ENCODE measurements at regions of chr3 and their contacts with region 1.

Region 1: DNA sequence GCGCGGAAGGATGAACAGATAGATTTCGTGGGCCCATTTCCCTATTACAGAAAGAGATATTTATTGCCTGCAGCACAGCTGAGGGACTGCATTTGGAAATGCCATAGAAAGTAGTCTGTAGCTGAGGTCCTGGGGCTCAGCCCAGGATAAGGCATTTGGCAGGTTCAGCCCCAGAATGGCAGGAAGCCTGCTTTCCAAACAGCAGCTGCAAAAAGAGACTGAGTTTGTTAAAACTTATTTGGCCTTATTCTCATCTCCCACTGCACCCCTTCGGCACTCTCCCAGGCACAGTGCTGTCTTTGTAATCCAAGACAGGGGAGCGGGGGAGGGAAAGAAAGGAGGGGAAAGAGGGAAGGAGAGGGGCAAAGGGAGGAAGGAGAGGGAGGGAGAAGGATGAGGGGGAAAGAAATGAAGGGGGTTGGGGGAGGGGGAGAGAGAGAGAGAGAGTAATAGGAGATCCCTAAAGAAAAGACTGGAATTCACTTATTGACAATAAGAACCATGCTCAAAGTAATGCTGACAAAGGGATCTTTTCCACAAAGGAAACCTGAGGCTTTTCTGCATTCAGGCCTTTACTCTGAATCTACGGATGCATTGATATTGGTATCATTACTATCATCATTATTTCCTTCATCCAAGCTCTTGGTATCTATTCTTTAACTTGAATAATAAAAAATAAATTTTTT is 94.0 kb upstream of the LRRN1 start:
- DNase-seq: no peak
- H3K4me3 Mint-ChIP-seq: no peak overlapping the region
- H3K27ac Mint-ChIP-seq: no peak overlapping the region
- H3K4me1 Mint-ChIP-seq: peaks cover 37% of the 10 kb centered on the region
- H3K27me3 Mint-ChIP-seq: no peaks in the 10 kb centered on the region
- CTCF ChIP-seq: no peak

Region 2: GRCh38 chr3:3302964-3303363 is 402.3 kb before region 1 on chr3:
- CTCF ChIA-PET with region 1: no interaction called
- intact Hi-C with region 1: no loop called
- DNase-seq: no peak
- H3K4me3 Mint-ChIP-seq: no peak overlapping the region
- H3K27ac Mint-ChIP-seq: no peak overlapping the region
- H3K4me1 Mint-ChIP-seq: no peaks in the 10 kb centered on the region
- H3K27me3 Mint-ChIP-seq: no peaks in the 10 kb centered on the region
- CTCF ChIP-seq: no peak

Region 3: GRCh38 chr3:3560591-3561311 is 144.5 kb before region 1 on chr3:
- CTCF ChIA-PET with region 1: no interaction called
- intact Hi-C with region 1: no loop called
- DNase-seq: no peak
- H3K4me3 Mint-ChIP-seq: no peak overlapping the region
- H3K27ac Mint-ChIP-seq: no peak overlapping the region
- H3K4me1 Mint-ChIP-seq: no peaks in the 10 kb centered on the region
- H3K27me3 Mint-ChIP-seq: no peaks in the 10 kb centered on the region
- CTCF ChIP-seq: no peak

Region 4: GRCh38 chr3:3603351-3603750 is 101.9 kb before region 1 on chr3:
- CTCF ChIA-PET with region 1: no interaction called
- intact Hi-C with region 1: no loop called
- DNase-seq: no peak
- H3K4me3 Mint-ChIP-seq: no peak overlapping the region
- H3K27ac Mint-ChIP-seq: no peak overlapping the region
- H3K4me1 Mint-ChIP-seq: peaks cover 8% of the 10 kb centered on the region
- H3K27me3 Mint-ChIP-seq: no peaks in the 10 kb centered on the region
- CTCF ChIP-seq: no peak

Region 5: DNA sequence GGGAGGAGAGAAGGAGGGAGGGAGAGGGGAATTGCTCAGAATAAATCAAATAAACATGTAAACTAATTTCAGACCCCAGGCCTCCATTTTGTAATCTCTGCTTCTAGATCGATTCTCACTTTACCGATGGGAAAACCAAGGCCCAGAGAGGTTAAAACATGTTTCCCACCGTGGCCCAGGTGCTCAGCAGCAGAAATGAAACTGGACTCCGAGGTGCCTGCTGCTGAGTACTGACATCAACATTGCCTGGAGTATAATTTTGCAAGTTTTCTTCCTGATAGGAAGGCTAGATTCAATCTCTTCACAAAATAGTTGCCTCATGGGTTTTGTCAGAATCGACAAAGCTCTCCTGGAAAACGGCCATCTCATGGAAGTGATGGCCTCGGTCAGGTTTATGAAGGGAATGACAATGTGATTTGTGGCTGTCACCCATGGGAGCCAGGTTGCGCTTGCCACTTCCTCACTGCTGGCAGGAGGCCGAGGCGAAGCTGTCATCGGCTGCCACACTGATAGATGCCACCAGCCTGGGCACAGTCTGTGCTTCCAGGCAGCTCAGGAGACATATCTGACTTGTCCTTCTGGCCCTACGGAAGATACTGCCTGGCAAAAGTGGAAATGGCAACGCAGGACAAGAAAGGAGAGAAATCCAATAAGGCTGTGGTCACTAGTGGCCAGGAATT is 39.1 kb before region 1 on chr3:
- CTCF ChIA-PET with region 1: interaction called, 5 read pairs
- intact Hi-C with region 1: loop called (anchors 5 kb)
- DNase-seq: peak; percentile 31
- H3K4me3 Mint-ChIP-seq: peak overlapping the region; percentile 42
- H3K27ac Mint-ChIP-seq: peak overlapping the region; percentile 83
- H3K4me1 Mint-ChIP-seq: peaks cover 41% of the 10 kb centered on the region
- H3K27me3 Mint-ChIP-seq: no peaks in the 10 kb centered on the region
- CTCF ChIP-seq: no peak

Region 6: DNA sequence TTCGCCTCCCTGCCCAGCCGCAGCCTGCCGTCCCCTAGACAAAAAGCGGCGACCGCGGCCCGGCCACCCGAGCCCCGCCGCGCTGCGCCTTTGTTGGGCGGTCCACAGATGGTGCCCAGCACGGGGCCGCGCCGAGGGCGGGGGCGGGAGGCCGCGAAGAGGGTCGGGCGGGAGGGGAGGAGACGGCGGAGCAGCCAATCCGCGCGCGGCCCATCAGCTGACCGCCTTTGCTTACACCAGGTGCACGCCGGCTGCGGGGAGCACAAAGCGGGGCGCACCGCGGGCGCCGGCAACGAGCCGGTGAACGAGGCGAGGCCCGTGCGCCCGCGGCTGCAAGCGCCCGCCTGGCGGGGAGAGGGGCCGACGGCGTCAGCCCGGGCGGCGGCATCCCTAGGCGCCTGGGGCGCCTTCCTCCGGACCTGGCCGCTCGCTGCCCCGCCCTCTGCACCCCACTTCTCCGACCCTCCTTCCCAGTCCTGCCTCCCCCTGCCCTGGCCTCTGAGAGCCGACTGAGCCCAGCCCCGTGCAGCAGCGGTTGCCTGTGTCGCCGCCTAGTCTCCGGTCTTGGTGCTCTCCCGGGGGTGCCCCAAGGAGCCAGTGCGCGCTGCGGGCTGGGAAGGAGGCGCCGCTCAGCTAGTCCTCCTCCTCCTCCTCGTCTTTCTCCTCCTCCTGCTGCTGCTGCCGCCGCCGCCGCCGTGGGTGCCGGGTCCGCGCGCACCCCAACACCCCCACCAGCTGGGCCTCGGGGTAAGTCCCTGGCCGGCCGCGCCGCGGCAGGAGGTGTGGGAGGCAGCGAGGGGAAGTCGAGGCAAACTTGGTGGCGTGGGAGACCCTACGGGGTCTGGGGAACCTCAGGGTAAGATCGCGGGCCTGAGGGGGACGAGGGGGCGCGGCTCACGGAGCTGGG is 94.2 kb after region 1 on chr3 and contains the start of gene LRRN1:
- CTCF ChIA-PET with region 1: no interaction called
- intact Hi-C with region 1: loop called (anchors 5 kb)
- DNase-seq: peak; percentile 73
- H3K4me3 Mint-ChIP-seq: peak within 1 kb of the TSS; percentile 91
- H3K27ac Mint-ChIP-seq: peak within 1 kb of the TSS; percentile 23
- H3K4me1 Mint-ChIP-seq: no peaks in the 10 kb centered on the region
- H3K27me3 Mint-ChIP-seq: peaks cover 24% of the 10 kb centered on the region
- CTCF ChIP-seq: no peak
- total RNA-seq, gene LRRN1: 12.6 and 22.1 TPM in 2 replicates

Region 7: GRCh38 chr3:3842356-3842755 is 137.1 kb after region 1 on chr3:
- CTCF ChIA-PET with region 1: no interaction called
- intact Hi-C with region 1: loop called (anchors 5 kb)
- DNase-seq: no peak
- H3K4me3 Mint-ChIP-seq: no peak overlapping the region
- H3K27ac Mint-ChIP-seq: no peak overlapping the region
- H3K4me1 Mint-ChIP-seq: no peaks in the 10 kb centered on the region
- H3K27me3 Mint-ChIP-seq: no peaks in the 10 kb centered on the region
- CTCF ChIP-seq: no peak

Region 8: GRCh38 chr3:4271834-4272233 is 566.6 kb after region 1 on chr3:
- CTCF ChIA-PET with region 1: no interaction called
- intact Hi-C with region 1: loop called (anchors 10 kb)
- DNase-seq: peak; percentile 6
- H3K4me3 Mint-ChIP-seq: no peak overlapping the region
- H3K27ac Mint-ChIP-seq: no peak overlapping the region
- H3K4me1 Mint-ChIP-seq: no peaks in the 10 kb centered on the region
- H3K27me3 Mint-ChIP-seq: peaks cover 14% of the 10 kb centered on the region
- CTCF ChIP-seq: no peak

Measured in Calu3 (cell line).